ENCODE measurements at regions of chr19 and their contacts with region 1.

Region 1: DNA sequence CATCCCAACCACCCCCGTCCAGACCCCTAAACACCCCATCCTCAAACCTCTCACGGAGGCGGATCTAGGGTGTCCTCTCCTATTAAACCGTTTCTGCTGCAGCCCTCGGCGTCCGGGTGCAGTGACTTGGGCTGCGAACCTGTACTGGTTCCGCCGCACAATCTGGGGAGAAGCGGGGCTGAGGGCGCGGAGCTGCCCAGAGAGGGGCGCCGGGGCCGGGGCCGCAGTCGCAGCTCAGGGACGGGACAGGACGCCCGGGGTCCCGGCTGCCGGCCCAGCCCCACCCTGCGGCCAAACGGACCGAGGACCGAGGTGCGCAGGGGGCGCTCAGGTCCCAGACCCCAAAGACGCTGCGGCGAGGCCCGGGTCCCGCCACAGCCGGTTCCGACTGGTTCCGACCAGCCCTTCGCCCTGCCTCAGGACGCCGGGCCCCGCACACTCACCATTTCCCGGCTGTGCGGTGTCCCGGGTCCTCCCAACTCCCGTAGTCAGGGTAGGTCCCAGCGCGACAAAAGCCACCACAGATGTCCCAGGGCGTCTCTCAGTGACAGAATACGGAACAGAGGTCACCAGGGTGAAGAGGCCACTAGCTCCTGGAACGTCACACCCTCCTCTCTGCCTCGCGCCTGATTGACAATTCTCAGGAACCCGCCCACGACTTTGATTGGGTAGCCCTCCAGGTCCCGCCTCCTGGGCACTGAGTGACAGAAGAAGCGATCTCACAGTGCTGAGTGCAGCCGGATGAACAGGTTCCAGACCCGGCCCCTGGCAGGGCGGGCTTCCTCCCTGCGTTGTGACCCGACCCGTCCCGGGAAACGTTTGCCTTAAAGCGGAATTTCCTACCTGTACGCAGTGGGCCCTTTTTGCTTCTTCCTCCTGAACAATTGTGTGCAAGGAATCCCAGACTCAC is at the start of gene ZNF44:
- DNase-seq: peak; percentile 97 to 98
- H3K4me3 ChIP-seq: peak within 1 kb of the TSS; percentile 67
- H3K27ac ChIP-seq: no peak within 1 kb of the TSS
- H3K4me1 ChIP-seq: peaks cover under 1% of the 10 kb centered on the region; the same call in 1 of the 2 replicates
- H3K27me3 ChIP-seq: no peaks in the 10 kb centered on the region
- CTCF ChIP-seq: no peak
- total RNA-seq, gene ZNF44: 4.0 and 5.0 TPM in 2 replicates

Region 2: GRCh38 chr19:12278713-12279112 is 15.8 kb before region 1 on chr19:
- CTCF ChIA-PET with region 1: no interaction called
- POLR2A ChIA-PET with region 1: no interaction called
- intact Hi-C with region 1: no loop called
- DNase-seq: no peak
- H3K4me3 ChIP-seq: no peak overlapping the region
- H3K27ac ChIP-seq: no peak overlapping the region
- H3K4me1 ChIP-seq: no peaks in the 10 kb centered on the region
- H3K27me3 ChIP-seq: no peaks in the 10 kb centered on the region
- CTCF ChIP-seq: no peak

Region 3: DNA sequence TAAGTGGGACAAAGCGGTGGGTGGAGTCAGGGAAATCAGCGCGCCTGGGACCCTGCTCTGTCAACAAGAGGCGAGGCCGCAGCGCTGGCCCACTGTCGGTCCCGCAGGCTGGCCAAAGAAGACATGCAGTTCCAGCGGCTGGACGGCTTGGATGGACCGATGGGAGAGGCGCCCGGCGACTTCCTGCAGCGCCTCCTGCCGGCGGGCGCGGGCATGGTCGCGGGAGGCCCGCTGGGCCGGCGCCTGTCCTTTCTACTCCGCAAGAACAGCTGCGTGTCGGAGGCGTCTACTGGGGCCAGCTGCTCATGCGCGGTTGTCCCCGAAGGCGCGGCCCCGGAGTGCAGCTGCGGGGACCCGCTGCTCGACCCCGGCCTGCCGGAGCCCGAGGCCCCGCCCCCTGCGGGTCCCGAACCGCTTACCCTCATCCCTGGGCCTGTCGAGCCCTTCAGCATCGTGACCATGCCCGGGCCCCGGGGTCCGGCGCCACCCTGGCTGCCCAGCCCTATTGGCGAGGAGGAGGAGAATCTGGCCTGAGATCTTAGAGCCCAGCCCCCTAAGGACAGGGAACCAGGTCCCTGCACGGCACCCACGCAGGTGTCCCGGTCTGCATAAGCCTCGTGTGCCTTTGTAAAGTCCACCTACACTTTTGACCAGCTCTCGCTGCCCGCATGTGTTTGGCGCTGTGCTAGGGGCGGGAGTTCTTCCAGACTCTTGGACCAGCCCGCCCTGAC is 463.2 kb after region 1 on chr19:
- CTCF ChIA-PET with region 1: no interaction called
- POLR2A ChIA-PET with region 1: interaction called, 24 read pairs
- intact Hi-C with region 1: no loop called
- DNase-seq: peak; percentile 60 to 70
- H3K4me3 ChIP-seq: peak overlapping the region; percentile 37; the same call in 1 of the 2 replicates
- H3K27ac ChIP-seq: no peak overlapping the region
- H3K4me1 ChIP-seq: peaks cover 6% of the 10 kb centered on the region; the same call in 1 of the 2 replicates
- H3K27me3 ChIP-seq: peaks cover 6% of the 10 kb centered on the region; the same call in 1 of the 2 replicates
- CTCF ChIP-seq: peak; percentile 97

Measured in PC-9 (cell line).